Motor neuron (in vitro differentiated cells): ENCODE measurements at regions of chr3 and their contacts with region 1.

Region 1: GRCh38 chr3:71583566-71584449 is at the start of gene FOXP1:
- ATAC-seq: peak; percentile 62 to 81 (median 76)
- H3K4me3 ChIP-seq: peak within 1 kb of the TSS; percentile 77 to 97 (median 86)
- H3K27ac ChIP-seq: peak within 1 kb of the TSS; percentile 99
- H3K4me1 ChIP-seq: peaks cover 15 to 39% of the 10 kb centered on the region in 2 donors
- total RNA-seq, gene FOXP1: 7.0 to 118 (median 74.5) TPM

Region 2: GRCh38 chr3:70531063-70531657 is 1052.6 kb before region 1 on chr3:
- in situ Hi-C with region 1: loop called in 1 of 9 experiments (anchors 25 kb)
- ATAC-seq: no peak
- H3K4me3 ChIP-seq: no peak overlapping the region
- H3K27ac ChIP-seq: no peak overlapping the region
- H3K4me1 ChIP-seq: peaks cover 0 to 17% of the 10 kb centered on the region in 2 donors

Region 3: DNA sequence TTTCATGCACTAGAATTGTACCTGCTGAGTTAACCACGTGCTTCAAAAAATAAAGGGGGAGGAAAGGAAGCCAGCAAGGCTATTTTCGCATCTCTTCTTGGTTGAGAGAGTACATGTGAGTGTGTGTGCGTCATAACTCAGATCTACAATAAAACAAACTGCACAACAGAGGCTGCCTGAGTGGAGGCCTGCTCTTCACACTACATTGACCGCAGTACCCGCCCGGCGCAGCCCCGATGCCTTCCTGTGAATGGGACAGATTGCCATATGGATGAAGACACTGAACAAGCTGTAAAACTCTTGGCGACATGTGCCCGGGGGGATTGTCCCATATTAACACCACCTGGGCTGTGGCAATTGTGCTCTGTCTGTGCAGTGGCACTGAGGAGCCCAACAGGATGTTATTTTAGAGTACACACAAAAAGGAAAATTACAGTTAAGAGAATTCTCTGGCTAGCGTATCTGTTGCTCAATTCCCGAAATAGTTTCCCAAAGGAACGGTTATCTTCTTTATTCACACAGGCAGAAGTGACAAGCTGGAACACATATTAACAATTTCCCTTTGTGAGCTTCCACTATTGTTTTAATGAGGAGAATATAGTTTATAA is 551.8 kb before region 1 on chr3:
- in situ Hi-C with region 1: loop called in 1 of 9 experiments (anchors 25 kb)
- ATAC-seq: no peak
- H3K4me3 ChIP-seq: no peak overlapping the region
- H3K27ac ChIP-seq: no peak overlapping the region
- H3K4me1 ChIP-seq: peaks cover 0 to 3% of the 10 kb centered on the region in 2 donors

Region 4: DNA sequence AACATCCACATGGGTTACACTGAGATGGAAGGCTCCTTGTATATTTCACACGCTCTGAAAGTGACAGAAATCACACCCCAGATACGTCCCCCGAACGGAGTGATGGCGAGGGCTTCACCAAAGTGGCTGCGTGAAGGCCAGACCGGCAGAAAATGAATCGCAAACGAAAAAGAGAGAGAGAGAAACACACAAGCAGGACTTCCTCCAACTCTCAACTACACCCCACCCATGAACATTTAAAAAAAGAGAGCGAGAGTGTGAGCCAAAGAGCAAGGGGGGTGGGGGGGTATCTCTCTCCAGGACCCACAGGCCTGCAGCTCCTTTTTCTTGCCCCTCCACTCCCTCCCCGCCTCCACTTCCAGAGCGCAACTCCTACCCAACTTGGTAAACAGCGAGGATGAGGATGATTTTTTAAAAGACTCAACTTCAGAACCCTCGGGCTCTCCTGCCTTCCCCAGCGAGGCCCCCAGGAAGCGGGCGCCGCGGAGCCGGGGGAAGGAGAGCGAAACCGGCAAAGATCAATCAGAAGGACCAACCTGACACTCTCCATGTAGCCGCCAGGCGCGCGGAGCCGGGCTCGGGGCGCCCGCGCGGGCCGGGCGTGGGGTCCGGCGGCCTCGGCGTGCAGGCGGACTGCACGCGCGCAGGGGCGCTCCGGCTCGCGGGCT is 519.4 kb before region 1 on chr3:
- in situ Hi-C with region 1: loop called in 1 of 9 experiments (anchors 25 kb)
- ATAC-seq: peak; percentile 10 to 58 (median 32)
- H3K4me3 ChIP-seq: peak overlapping the region; percentile 46 to 64 (median 56)
- H3K27ac ChIP-seq: peak overlapping the region; percentile 47 to 54
- H3K4me1 ChIP-seq: peaks cover 31 to 69% of the 10 kb centered on the region in 2 donors

Region 5: DNA sequence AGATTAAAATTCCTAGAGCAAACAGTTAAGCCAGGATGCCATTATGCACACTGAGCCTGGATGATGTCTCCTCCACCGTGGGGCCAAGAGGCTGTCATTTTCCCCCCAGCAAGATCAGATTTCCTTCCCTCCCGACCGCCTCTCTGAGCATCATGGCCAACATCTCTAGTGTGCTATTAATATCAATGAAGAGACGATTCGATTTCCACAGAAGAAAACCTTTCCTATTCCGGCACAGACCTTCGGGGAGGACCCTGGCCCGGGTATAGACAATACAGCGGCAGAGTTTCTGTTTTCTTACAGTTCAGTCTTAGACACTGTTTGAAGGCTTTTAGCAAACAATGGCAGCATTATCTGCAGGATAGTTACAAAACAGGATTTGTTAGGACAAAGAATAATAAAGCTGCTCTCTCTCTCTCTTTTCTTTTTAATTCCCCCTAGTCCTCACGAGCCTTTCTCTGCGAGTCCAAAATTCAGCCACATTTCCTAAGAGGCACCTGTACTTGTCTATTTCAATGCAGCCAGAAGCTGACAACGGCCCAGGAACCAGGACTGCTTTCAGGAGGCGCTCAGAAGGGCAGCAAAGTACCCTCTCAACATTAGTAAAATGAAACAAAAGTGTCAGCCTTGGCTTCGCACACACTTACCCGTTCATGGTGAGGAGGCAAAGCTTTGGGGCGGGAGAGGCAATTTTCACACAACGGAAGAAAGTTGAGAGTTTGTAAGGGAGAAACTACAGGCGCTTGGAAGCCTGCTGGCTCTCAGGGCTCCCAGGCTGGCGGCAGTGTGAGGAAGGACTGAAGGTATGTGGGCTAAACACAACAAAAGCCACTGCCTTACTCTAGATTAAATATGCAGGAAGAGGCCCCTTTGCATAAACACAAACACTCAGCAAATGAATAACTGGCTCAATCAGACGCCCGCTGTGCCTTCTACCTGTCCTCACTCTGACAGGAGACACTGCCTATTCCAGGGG is 278.3 kb before region 1 on chr3:
- in situ Hi-C with region 1: loop called in 1 of 9 experiments (anchors 25 kb)
- ATAC-seq: peak; percentile 55 to 84 (median 73)
- H3K4me3 ChIP-seq: peak overlapping the region; percentile 18 to 38 (median 32)
- H3K27ac ChIP-seq: peak overlapping the region in 1 of 2 donors; percentile 51
- H3K4me1 ChIP-seq: peaks cover 14 to 59% of the 10 kb centered on the region in 2 donors

Region 6: GRCh38 chr3:71930056-71930991 is 346.5 kb after region 1 on chr3:
- in situ Hi-C with region 1: no loop called
- ATAC-seq: peak in 3 of 8 experiments; percentile 44 to 87 (median 83)
- H3K4me3 ChIP-seq: no peak overlapping the region
- H3K27ac ChIP-seq: no peak overlapping the region
- H3K4me1 ChIP-seq: peaks cover 0 to 13% of the 10 kb centered on the region in 2 donors

Region 7: DNA sequence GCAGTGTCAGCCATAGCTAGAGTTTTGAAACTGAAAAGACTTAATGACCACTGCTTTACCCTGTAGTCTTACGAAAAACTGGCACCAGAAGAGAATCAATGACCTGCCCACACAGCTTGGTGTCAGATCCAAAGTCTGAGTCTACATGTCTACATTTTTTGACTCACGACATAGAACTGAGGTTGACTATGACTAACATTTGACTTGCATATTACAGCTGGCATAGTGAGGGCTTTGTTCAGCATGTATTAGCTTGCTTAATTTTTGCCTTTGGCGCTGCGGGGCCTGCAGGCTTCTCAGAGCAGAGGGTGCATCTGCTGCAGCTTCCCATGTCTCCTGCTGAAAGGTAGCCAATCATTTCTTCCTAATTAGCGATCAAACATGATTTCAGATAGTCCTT is 1644.6 kb after region 1 on chr3:
- in situ Hi-C with region 1: no loop called
- ATAC-seq: peak; percentile 11 to 91 (median 46)
- H3K4me3 ChIP-seq: no peak overlapping the region
- H3K27ac ChIP-seq: no peak overlapping the region
- H3K4me1 ChIP-seq: peaks cover 42 to 47% of the 10 kb centered on the region in 2 donors